ENCODE measurements at regions of chr4 and their contacts with region 1.

Region 1: DNA sequence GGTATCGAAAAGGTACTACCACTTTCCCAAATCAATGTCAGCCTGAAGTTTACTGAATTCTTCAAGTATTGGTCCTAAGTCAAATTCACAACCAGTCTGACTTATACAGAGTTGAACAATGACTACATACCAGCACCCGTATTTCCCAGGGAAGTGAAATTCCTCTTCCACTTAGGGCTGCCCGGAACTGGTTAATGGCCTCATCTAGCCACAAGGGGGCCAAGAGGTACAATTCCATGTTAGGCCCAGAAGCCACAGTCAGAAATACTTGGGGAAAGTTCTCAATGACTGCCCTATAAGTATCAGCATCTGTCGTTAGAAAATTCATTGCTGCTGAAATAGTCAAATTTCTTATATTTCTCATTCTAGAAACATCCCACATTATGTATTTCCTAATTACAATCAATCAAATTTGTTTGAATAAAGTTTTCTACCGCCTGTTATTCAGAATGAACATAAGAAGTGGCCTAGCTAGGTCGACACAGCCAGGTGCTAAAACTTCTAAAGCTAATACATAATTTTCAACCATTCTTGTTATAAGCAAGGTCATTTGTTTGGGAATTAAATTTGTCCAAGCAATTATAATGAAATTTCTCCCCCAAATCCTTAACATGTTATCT is 5.7 kb upstream of the PCDH7 start:
- H3K4me3 Mint-ChIP-seq: no peak overlapping the region
- H3K27ac Mint-ChIP-seq: no peak overlapping the region
- H3K4me1 Mint-ChIP-seq: peaks cover 16% of the 10 kb centered on the region
- H3K27me3 Mint-ChIP-seq: peaks cover 41% of the 10 kb centered on the region

Region 2: GRCh38 chr4:31674313-31674947 is 959.9 kb after region 1 on chr4:
- intact Hi-C with region 1: loop called (anchors 10 kb)
- H3K4me3 Mint-ChIP-seq: no peak overlapping the region
- H3K27ac Mint-ChIP-seq: no peak overlapping the region
- H3K4me1 Mint-ChIP-seq: no peaks in the 10 kb centered on the region
- H3K27me3 Mint-ChIP-seq: no peaks in the 10 kb centered on the region

Measured in dendritic cell treated with granulocyte-macrophage colony-stimulating factor and Interleukin-4, amounts not matched to agents 40 ng/mL and 50 ng/mL, for 4 days (primary cell).